Testis (tissue), 5 donors: ENCODE measurements at regions of chr12 and their contacts with region 1.

Region 1: DNA sequence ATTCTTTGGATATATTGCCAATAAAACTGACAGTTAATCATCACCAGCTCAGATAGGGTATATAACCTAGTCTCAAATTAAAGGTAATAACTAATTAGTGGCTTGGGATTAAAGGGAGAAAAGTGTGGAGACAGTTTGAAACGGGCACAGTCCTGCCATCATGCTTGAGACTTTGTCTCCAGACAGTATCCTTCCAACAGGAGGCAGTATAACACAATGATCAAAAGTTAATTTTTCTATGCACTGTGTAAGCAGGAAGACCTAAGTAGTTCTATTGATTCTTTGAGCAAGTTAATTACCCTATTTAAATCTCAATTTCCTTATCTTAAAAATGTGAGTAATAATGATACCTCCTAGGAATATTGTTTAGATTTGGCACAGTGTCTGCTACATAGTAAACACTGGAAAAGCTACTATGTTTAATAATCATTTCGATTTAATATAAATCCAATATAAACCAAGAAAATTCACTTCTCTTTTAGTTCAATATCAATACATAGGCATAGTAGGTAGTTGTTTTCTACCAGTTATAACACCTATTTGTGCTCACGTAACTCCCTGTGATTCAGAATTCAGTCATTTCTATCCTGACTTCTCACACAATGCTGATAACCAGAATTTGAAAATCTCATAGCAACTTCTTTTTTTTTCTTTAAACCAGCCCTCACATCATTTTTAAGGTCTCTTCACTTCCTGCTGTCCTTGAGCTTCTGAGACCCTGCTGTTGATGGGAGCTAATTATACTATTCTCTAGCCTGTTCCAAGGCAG is 53.7 kb downstream of the GALNT4 start:
- DNase-seq: no peak
- H3K4me3 ChIP-seq: no peak overlapping the region
- H3K27ac ChIP-seq: no peak overlapping the region
- H3K4me1 ChIP-seq: no peaks in the 10 kb centered on the region
- H3K27me3 ChIP-seq: no peaks in the 10 kb centered on the region
- CTCF ChIP-seq: peak; percentile 20 to 50 (median 47)
- POLR2A ChIP-seq: no peak

Region 2: DNA sequence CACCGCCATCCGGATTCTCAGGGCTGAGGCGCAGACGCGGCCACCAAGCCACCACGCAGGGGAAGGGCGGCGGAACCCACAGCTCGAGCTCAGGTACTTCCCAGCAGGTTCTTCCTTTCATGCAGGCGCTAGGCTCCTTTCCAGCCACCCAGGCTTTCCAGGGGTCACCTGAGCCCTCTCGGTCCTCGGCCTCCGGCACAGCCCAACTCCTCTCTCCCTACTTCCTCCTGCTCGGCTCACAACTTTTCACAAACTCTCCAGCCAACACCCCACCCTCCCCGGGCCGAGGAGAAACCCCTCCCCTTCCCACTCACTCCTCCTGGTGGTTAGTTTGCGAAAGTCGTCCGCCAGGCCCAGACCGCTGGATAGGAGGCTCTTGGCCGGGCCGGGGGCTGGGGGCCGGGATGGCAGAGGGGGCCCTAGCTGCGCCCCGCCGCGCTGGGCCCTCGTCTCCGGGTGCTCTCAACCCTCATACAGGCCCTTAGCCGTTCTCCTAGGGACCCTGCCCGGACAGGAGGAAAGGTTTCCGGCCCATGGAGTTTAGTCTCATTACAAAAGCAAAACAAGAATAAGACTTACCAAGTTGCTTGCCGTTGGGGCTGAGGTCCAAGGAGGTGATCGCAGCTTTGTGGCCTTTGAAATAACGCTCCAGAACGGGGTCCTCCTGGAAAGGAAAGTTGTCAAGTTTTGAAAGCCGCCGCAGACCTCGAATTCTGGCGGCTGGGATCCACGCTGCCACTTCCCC is 53.8 kb after region 1 on chr12 and contains the start of gene GALNT4:
- intact Hi-C with region 1: loop called (anchors 10 kb)
- DNase-seq: peak; percentile 91
- H3K4me3 ChIP-seq: peak within 1 kb of the TSS; percentile 70 to 98
- H3K27ac ChIP-seq: peak within 1 kb of the TSS; percentile 91 to 95
- H3K4me1 ChIP-seq: peaks cover 14% of the 10 kb centered on the region
- H3K27me3 ChIP-seq: no peaks in the 10 kb centered on the region
- CTCF ChIP-seq: peak; percentile 41 to 61 (median 56)
- POLR2A ChIP-seq: no peak
- total RNA-seq, gene GALNT4: 3.4 to 4.3 TPM